Motor neuron (in vitro differentiated cells): ENCODE measurements at regions of chr15 and their contacts with region 1.

Region 1: DNA sequence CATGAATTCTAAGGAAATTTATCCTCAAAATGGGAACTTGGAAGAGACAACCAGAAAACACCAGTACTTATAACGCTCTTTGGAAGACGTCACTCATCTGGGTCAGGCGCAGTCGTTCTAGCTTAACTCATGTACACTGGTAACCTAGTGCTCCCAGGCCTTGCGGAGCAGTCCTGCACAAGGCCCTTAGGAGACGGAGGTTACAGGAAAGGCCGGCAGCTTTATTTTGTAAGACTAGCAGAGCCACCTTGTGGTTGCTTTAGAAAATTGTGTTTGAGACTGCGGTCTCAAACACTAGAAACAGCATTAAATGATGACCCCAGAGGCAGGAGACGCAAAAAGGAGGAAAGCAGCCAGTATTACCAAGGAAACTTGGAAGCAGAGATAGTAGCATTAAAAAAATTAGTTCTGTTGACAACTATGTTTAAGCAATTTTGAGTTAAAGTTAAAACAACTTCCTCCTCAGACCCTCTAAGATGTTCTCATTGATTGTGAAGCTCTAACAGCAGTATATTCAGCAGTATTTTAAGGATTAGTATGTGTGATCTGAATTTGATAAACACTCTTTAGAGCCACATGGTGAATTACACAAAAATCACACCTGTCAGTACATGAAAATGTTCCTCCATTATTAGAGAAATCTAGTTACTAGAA is 141.9 kb upstream of the C2CD4B start:
- ATAC-seq: peak; percentile 73 to 93 (median 83)
- H3K4me3 ChIP-seq: no peak overlapping the region
- H3K27ac ChIP-seq: no peak overlapping the region
- H3K4me1 ChIP-seq: no peaks in the 10 kb centered on the region

Region 2: DNA sequence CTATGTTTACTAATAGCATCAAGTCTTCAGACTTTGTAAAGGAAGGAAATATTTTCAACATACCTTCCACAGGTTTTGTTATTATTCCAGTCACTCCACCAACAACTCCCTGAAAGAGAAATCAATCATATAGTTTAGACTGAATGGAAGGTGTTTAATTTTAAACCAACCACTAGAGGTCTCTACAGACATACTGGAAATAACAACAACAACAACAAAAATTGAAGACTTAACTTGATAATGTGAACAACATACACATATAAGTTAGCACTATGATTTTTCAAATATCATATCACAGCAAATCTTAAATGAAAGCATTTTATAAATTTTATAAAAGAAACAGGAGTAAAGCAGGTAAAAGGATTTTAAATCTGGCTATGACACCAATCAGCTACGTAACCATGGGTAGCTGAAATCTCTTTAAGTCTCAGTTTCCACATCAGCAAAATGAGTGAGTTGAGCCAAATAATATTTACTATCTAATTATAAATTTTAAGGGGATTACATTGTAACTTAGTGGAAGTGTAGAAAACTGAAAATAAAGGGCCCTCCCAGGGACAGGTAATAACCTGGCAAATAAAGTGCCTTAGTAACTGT is 435.0 kb before region 1 on chr15:
- in situ Hi-C with region 1: loop called in 1 of 9 experiments (anchors 25 kb)
- ATAC-seq: peak in 3 of 8 experiments; percentile 45 to 53 (median 48)
- H3K4me3 ChIP-seq: no peak overlapping the region
- H3K27ac ChIP-seq: no peak overlapping the region
- H3K4me1 ChIP-seq: no peaks in the 10 kb centered on the region

Region 3: DNA sequence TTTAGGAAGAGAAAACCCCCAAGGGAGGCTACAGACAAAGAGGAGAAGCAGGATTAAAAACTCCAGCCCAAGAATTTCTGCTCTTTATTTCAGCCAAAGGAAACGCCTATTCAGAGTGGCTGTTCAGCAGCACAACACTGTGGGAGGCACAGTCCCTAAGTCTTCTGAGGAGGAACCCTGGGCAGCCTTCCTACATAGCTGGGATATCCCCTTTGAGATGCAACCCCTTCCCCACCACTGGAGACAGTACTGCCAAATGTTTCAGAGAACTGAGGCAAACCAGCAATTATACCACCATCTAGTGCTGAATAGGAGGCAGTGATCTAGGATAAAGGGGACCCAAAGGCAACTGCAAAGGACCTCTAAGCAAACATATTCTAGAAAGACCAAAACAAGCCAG is 414.8 kb before region 1 on chr15:
- in situ Hi-C with region 1: no loop called
- ATAC-seq: no peak
- H3K4me3 ChIP-seq: no peak overlapping the region
- H3K27ac ChIP-seq: no peak overlapping the region
- H3K4me1 ChIP-seq: peaks cover 0 to 5% of the 10 kb centered on the region in 2 donors

Region 4: DNA sequence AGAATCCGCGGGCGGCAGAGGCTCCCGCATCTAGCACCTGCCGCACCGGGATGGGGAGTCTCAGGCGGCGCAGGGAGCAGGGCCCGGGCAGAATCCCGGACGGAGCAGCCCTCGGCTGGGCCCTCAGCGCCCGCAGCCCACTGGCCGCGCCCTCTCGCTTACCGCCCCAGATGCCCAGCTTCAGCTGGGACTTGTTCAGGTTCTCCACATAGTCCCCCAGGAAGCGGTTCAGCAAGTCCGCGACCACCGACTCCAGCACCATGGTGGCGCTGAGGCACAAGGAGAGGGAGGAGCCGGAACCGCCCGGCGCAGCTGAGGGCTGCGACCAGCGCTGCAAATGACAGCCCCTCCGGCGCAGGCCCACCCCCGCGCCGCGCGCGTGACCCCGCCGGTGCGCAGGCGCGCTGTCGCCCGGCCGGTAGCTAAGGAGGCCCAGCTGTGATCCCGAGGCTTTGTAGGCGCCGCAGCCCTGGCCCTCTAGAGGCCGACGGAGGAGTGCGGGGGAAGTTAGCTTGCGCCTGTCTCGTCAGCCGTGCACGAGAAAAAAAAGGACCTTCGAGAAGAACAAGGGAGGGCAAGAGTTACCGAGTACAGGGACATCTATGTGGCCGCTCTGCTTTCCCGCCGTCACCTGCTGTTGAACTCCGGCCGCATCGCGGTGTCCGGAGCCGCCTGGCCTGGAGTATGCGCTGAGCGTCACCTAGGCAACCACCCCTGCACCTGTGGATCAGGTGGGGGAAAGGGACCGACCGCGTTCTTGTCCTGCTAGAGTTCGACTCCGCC is 246.7 kb before region 1 on chr15 and contains the start of gene VPS13C:
- in situ Hi-C with region 1: loop called in 1 of 9 experiments (anchors 25 kb)
- ATAC-seq: peak; percentile 84 to 94 (median 93)
- H3K4me3 ChIP-seq: peak within 1 kb of the TSS; percentile 55 to 72 (median 59)
- H3K27ac ChIP-seq: peak within 1 kb of the TSS; percentile 21 to 69
- H3K4me1 ChIP-seq: peaks cover 2 to 3% of the 10 kb centered on the region in 2 donors
- total RNA-seq, gene VPS13C: 31.2 to 166 (median 63.2) TPM

Region 5: DNA sequence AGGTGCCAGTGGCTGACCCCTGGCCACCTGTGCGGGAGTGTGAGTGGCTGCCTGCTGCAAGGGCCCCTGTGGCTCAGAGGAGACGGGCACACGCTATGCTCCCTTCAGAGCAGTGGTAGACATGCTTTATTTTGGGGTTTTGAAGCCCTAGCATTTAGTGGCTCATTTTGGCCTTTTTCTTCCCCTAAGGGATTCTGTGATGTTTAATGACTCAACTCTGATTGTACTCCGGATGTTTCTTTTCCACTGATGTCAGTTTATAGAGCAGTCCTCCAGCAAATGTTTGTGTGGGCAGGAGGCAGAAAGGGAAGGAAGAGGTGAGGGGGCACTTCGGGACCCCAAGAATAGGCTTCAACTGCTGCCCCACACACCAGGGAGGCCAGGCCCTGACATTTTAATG is 147.0 kb after region 1 on chr15:
- in situ Hi-C with region 1: no loop called
- ATAC-seq: no peak
- H3K4me3 ChIP-seq: no peak overlapping the region
- H3K27ac ChIP-seq: no peak overlapping the region
- H3K4me1 ChIP-seq: peaks cover 5 to 6% of the 10 kb centered on the region in 2 donors

Region 6: GRCh38 chr15:62782039-62782791 is 475.2 kb after region 1 on chr15:
- in situ Hi-C with region 1: no loop called
- ATAC-seq: peak; percentile 80 to 90 (median 85)
- H3K4me3 ChIP-seq: no peak overlapping the region
- H3K27ac ChIP-seq: no peak overlapping the region
- H3K4me1 ChIP-seq: peaks cover 21 to 23% of the 10 kb centered on the region in 2 donors